Head of caudate nucleus (tissue), 42 donors: ENCODE measurements at regions of chr15 and their contacts with region 1.

Region 1: GRCh38 chr15:52780172-52780980 is 9.8 kb downstream of the ONECUT1 start:
- DNase-seq: peak; percentile 39 to 90 (median 74)

Region 2: DNA sequence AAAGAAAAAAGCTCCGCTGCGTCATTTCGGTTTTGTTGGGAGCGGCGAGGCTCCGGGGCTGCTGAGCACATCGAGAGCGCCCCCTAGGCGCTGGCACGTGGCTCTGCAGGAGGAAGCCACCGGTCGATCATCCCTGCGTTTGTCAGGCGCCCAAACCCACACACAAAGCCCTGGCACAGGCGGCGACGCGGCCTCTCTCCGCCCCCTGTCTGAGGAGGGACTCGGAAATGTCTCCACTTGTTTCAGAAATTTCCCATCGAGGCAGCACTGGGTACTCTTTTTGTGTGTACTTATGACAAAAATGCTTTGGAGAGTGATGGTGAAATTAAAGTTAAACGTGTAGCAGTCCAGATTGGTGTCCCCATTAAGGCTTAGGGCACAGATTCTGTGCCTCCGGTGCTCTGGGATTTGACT is 417.1 kb after region 1 on chr15:
- intact Hi-C with region 1: loop called (anchors 10 kb)
- DNase-seq: peak; percentile 29 to 87 (median 76)

Region 3: DNA sequence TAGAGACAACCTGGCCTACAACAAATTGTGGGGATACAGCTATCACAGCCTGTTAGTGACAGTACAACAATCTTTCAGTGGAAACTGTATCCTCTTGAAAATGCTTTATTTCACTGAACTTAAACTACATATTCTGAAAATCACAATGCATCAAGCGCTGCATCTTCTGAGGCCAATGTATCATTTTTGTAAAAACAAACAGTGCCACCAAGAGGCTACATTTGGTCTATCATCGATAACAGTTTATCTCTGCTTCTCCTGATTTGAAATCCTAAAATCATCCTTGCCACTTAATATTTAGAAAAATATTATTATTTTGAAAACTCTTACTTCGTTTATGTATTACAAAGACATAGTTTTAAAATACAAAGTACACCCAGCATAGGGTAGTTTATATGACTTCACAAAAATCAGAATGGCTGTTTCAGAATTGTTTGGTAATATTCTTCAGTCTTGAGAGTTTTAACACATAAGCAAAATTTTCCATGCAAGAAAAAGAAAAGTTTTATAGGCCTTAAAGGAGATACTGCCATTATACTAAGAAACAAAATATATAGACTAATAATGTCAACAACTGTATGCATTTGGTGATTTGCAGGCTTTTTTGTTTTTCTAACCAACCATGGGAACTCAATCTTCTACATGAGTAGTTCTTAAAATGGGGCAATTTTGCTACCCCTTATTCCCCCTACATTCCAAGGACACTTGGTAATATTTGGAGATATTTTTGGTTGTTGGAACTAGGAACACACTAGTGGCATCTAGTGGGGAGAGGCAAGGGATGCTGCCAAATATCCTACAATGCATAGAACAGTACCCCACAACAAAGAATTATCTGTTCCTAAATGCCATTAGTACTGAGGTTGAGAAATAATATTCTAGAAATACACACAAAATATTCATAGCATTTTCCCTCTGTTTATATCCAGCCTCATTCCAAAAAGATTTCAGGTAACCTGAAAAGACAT is 936.8 kb after region 1 on chr15:
- intact Hi-C with region 1: loop called (anchors 5 kb)
- DNase-seq: peak in 6 of 42 donors; percentile 1 to 29 (median 8)